SK-N-SH (cell line): ENCODE measurements at regions of chr11 and their contacts with region 1.

Region 1: DNA sequence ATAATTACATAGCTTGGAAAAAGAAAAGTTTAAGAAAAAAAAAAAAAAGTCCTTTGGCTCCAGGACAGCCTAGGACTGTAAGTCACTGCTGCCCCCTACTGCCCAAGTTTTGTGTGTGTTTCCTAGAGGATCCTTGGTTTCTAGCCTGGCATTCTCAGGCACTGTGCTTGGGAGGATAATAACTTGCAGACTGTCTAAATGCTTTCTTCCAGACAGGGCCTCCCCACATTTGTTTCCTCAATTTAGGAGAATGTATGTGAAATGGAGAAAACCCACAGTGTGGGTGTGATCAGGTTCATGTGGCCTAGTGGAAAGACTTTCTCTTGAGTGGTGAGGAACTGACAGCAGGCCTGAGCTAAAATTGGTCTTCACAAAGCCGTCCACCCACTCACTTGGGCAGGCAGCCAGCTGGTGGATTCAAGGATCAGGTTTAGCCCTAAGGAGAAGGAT is 191.0 kb downstream of the NAV2 start:
- DNase-seq: peak; percentile 59
- H3K4me3 ChIP-seq: no peak overlapping the region; a peak in 1 of 4 replicates
- H3K27ac ChIP-seq: peak overlapping the region; percentile 50 to 57
- H3K4me1 ChIP-seq: peaks cover 0 to 10% of the 10 kb centered on the region in 2 experiments; a peak in 2 of 4 replicates
- H3K27me3 ChIP-seq: no peaks in the 10 kb centered on the region
- CTCF ChIP-seq: peak; percentile 88
- EP300 ChIP-seq: 0 out of 4 replicates have a peak, but pooled peaks of 1 of the 2 experiments have one; percentile 14
- RAD21 ChIP-seq: peak; percentile 90

Region 2: DNA sequence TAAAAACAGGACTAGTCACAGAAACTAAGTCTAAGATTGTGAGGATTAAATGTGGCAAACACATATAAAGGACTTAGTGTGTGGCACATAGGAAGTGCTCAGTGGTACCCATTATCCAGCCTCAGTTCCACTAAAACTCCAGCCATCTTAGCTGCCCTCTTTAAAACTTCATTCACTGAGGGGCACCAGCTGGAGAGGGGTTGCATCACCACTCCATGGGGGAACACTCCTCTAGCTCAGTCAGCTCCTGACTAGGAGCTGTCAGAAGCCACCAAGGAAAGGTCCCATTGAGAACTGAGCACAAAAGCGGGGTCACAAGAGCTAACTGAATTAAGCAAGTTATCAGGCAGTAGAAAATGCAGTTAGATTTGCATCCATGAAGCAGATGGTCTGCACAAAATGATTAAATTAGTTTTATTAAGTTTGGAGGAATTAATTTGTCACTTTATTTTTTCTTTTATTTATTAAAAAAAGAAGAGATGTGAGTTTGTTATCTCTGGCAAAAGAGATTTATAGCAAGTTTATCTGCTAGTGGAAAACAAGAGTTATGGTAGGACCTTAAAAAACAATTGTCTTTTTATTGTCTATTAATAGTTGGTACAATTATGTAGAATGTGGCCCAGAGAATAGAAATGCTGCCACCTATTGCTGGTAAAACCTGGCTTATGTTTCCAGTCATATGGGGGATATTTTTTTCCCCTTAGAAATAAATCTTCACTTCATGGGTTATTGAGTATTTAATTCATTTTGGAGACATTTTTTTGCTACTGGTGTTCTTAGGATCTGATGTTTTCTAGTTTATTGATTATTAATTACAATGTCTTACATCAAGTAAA is 95.4 kb before region 1 on chr11:
- CTCF ChIA-PET with region 1: interaction called, 31 read pairs
- POLR2A ChIA-PET with region 1: no interaction called
- DNase-seq: peak; percentile 39
- H3K4me3 ChIP-seq: no peak overlapping the region
- H3K27ac ChIP-seq: peak overlapping the region; percentile 12 to 69; a peak in 2 of 4 replicates
- H3K4me1 ChIP-seq: peaks cover 4 to 65% of the 10 kb centered on the region in 2 experiments; a peak in 3 of 4 replicates
- H3K27me3 ChIP-seq: no peaks in the 10 kb centered on the region
- CTCF ChIP-seq: peak; percentile 48
- EP300 ChIP-seq: peak in 1 of 2 experiments; percentile 92; a peak in 2 of 4 replicates
- RAD21 ChIP-seq: peak; percentile 65

Region 3: GRCh38 chr11:19846654-19847305 is 56.9 kb before region 1 on chr11:
- CTCF ChIA-PET with region 1: interaction called, 12 read pairs
- POLR2A ChIA-PET with region 1: no interaction called
- DNase-seq: no peak
- H3K4me3 ChIP-seq: no peak overlapping the region
- H3K27ac ChIP-seq: peak overlapping the region in 1 of 2 experiments; percentile 19; a peak in 3 of 4 replicates
- H3K4me1 ChIP-seq: peaks cover 0 to 64% of the 10 kb centered on the region in 2 experiments; a peak in 2 of 4 replicates
- H3K27me3 ChIP-seq: no peaks in the 10 kb centered on the region
- CTCF ChIP-seq: no peak
- EP300 ChIP-seq: no peak
- RAD21 ChIP-seq: no peak

Region 4: DNA sequence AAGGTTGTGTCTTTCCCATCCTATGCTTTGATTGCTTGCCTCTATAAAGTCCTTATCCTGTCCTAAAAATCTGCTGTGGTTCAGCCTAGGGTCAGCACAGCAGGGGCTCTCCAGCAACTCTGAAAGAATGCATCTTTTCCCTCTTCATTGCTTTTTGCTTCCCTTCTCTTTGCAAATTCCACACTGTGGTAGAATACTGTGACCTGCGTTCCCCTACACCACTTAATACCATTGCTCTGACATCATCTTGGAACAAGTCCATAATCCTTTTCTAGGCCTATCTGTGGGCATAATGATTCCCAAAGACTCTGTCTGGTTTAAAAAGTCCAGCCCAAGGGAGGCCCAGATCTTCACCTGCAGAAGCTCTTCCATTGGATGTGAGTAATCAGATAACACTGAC is 13.3 kb before region 1 on chr11:
- CTCF ChIA-PET with region 1: interaction called, 13 read pairs
- POLR2A ChIA-PET with region 1: interaction called, 4 read pairs
- DNase-seq: no peak
- H3K4me3 ChIP-seq: no peak overlapping the region
- H3K27ac ChIP-seq: peak overlapping the region; percentile 69 to 82; a peak in 3 of 4 replicates
- H3K4me1 ChIP-seq: peaks cover 14 to 24% of the 10 kb centered on the region in 2 experiments
- H3K27me3 ChIP-seq: no peaks in the 10 kb centered on the region
- CTCF ChIP-seq: no peak
- EP300 ChIP-seq: peak in 1 of 2 experiments; percentile 60; a peak in 1 of 4 replicates
- RAD21 ChIP-seq: no peak

Region 5: GRCh38 chr11:19938169-19938856 is 34.7 kb after region 1 on chr11:
- CTCF ChIA-PET with region 1: interaction called, 19 read pairs
- POLR2A ChIA-PET with region 1: no interaction called
- DNase-seq: peak; percentile 77
- H3K4me3 ChIP-seq: peak overlapping the region in 1 of 2 experiments; percentile 31; a peak in 1 of 4 replicates
- H3K27ac ChIP-seq: peak overlapping the region; percentile 28 to 93
- H3K4me1 ChIP-seq: peaks cover 22 to 36% of the 10 kb centered on the region in 2 experiments
- H3K27me3 ChIP-seq: no peaks in the 10 kb centered on the region
- CTCF ChIP-seq: peak; percentile 96
- EP300 ChIP-seq: no peak
- RAD21 ChIP-seq: peak; percentile 69